ENCODE measurements at regions of chr16 and their contacts with region 1.

Region 1: GRCh38 chr16:30534368-30535105 is at the start of gene ZNF747:
- DNase-seq: peak; percentile 94
- ATAC-seq: peak; percentile 91 to 93
- total RNA-seq, gene ZNF747: 8.0 to 8.2 TPM

Region 2: DNA sequence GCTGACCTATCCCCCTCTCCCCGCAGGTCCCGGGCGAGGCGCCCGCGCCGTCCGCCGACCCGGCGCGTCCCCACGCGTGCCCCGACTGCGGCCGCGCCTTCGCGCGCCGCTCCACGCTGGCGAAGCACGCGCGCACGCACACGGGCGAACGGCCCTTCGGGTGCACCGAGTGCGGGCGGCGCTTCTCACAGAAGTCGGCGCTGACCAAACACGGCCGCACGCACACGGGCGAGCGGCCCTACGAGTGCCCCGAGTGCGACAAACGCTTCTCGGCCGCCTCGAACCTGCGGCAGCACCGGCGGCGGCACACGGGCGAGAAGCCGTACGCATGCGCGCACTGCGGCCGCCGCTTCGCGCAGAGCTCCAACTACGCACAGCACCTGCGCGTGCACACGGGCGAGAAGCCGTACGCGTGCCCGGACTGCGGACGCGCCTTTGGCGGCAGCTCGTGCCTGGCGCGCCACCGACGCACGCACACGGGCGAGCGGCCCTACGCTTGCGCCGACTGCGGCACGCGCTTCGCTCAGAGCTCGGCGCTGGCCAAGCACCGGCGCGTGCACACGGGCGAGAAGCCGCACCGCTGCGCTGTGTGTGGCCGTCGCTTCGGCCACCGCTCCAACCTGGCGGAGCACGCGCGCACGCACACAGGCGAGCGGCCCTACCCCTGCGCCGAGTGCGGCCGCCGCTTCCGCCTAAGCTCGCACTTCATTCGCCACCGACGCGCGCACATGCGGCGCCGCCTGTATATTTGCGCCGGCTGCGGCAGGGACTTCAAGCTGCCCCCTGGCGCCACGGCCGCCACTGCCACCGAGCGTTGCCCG is 116.8 kb before region 1 on chr16:
- intact Hi-C with region 1: no loop called
- DNase-seq: peak; percentile 90
- ATAC-seq: peak; percentile 96 to 97

Region 3: GRCh38 chr16:30457256-30457655 is 77.3 kb before region 1 on chr16:
- intact Hi-C with region 1: no loop called
- DNase-seq: no peak
- ATAC-seq: peak; percentile 70 to 83

Region 4: DNA sequence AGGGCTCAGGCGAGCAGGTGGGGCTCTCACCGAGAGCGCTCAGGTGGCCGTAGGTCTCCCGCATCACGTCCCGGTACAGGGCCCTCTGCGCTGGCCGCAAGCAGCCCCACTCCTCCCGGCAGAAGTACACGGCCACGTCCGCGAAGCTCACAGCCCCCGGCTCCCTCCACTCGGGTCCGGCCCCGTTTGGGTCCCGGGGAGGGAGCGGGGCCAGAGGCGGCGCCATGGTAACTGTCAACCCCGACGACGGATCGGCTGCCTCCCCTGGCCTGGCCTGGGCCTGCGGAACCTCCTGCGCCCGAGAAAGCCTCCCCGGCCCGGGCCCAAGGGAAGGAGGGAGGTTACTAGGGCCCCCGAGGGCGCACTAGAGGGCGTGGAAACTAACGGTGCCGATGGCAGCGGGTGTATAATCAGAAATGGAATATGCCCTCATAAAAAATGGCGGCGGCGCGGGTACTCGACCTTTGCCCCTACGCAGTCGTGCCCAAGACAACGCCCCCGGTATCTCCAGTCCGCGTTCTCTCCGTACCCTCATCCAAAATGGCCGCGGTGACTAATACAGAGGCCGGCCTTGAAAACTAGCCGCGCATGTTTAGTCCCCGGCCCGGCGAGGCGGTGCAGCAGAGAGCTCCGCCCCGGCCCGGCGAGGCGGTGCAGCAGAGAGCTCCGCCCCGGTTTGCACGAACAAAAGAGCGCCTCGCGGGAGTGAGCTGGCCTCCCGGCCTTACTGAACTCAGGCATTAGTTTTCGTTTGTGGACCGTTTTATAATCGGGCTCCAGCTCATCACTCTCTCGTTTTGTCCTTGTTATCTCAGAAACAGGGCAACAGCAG is 23.6 kb after region 1 on chr16 and contains the start of gene ZNF764:
- intact Hi-C with region 1: loop called in 1 of 2 experiments (anchors 2 kb)
- DNase-seq: peak; percentile 98
- ATAC-seq: peak; percentile 97
- total RNA-seq, gene ZNF764: 5.7 to 8.7 TPM